ENCODE measurements at regions of chr5 and their contacts with region 1.

Region 1: DNA sequence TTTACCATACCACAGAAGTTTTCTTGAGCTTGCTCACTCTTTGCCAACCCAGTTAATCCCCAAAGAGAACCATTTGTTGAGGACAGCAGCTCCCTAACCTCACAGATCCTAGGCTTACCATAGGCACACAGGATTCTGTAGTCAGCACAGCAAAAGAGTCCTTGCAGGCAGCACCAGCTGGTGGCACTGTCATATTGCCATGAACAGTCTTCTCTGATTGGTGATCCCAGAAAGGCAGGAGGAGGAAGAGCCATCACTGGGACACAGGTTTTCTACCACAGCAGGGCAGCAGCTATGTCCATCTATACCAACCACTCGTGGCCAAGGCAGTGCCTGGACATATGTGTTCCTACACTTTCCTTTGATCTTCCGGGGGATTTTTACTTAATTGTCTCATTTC is 297.1 kb upstream of the CD180 start:
- DNase-seq: peak; percentile 55
- H3K4me3 Mint-ChIP-seq: no peak overlapping the region
- H3K27ac Mint-ChIP-seq: no peak overlapping the region
- H3K4me1 Mint-ChIP-seq: peaks cover 25% of the 10 kb centered on the region
- H3K27me3 Mint-ChIP-seq: no peaks in the 10 kb centered on the region
- CTCF ChIP-seq: no peak

Region 2: GRCh38 chr5:67246108-67246507 is 247.6 kb before region 1 on chr5:
- CTCF ChIA-PET with region 1: no interaction called
- intact Hi-C with region 1: loop called (anchors 10 kb)
- DNase-seq: peak; percentile 47
- H3K4me3 Mint-ChIP-seq: no peak overlapping the region
- H3K27ac Mint-ChIP-seq: no peak overlapping the region
- H3K4me1 Mint-ChIP-seq: peaks cover 8% of the 10 kb centered on the region
- H3K27me3 Mint-ChIP-seq: no peaks in the 10 kb centered on the region
- CTCF ChIP-seq: peak; percentile 58

Region 3: GRCh38 chr5:67623078-67623477 is 129.4 kb after region 1 on chr5:
- CTCF ChIA-PET with region 1: no interaction called
- intact Hi-C with region 1: no loop called
- DNase-seq: no peak
- H3K4me3 Mint-ChIP-seq: no peak overlapping the region
- H3K27ac Mint-ChIP-seq: no peak overlapping the region
- H3K4me1 Mint-ChIP-seq: peaks cover 20% of the 10 kb centered on the region
- H3K27me3 Mint-ChIP-seq: no peaks in the 10 kb centered on the region
- CTCF ChIP-seq: no peak

Measured in Calu3 (cell line).